ENCODE measurements at regions of chr1 and their contacts with region 1.

Region 1: GRCh38 chr1:88061492-88062177 is 622.4 kb upstream of the PKN2 start:
- DNase-seq: peak; percentile 38 to 46
- H3K4me3 ChIP-seq: no peak overlapping the region
- H3K27ac ChIP-seq: no peak overlapping the region
- H3K4me1 ChIP-seq: no peaks in the 10 kb centered on the region
- H3K27me3 ChIP-seq: no peaks in the 10 kb centered on the region
- CTCF ChIP-seq: peak; percentile 78

Region 2: DNA sequence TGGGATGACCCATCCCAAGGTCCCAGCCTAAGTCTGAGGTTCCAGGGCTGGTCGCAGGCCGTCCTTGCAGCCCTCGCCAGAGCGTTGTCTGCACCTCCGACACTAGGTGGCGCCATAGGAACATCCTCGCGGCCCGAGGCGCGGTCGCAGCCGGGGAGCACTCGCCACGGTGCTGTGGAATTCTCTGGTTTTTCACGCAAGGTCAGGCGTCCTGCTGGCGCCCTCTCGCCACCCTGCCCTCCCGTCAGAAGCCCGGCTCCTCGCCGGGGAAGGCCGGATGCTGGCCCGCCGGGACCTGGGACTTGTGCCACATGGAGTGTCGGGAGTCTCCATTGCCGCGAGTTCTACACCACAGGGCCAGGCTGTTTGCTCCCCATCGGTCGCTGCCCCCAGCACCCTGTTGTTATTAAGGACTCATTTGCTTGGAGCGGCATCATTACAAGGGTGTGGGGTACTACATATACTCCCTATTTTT is 929.8 kb before region 1 on chr1:
- CTCF ChIA-PET with region 1: no interaction called
- POLR2A ChIA-PET with region 1: no interaction called
- intact Hi-C with region 1: loop called (anchors 5 kb)
- DNase-seq: peak; percentile 55 to 69
- H3K4me3 ChIP-seq: peak overlapping the region; percentile 46; the same call in 1 of the 2 replicates
- H3K27ac ChIP-seq: no peak overlapping the region
- H3K4me1 ChIP-seq: 0 out of 2 replicates have a peak, but pooled peaks cover 12% of the 10 kb centered on the region
- H3K27me3 ChIP-seq: no peaks in the 10 kb centered on the region
- CTCF ChIP-seq: peak; percentile 97

Region 3: GRCh38 chr1:87292684-87293493 is 768.7 kb before region 1 on chr1:
- CTCF ChIA-PET with region 1: no interaction called
- POLR2A ChIA-PET with region 1: no interaction called
- intact Hi-C with region 1: loop called (anchors 10 kb)
- DNase-seq: peak; percentile 42 to 48
- H3K4me3 ChIP-seq: no peak overlapping the region
- H3K27ac ChIP-seq: no peak overlapping the region
- H3K4me1 ChIP-seq: no peaks in the 10 kb centered on the region
- H3K27me3 ChIP-seq: no peaks in the 10 kb centered on the region
- CTCF ChIP-seq: peak; percentile 96

Region 4: DNA sequence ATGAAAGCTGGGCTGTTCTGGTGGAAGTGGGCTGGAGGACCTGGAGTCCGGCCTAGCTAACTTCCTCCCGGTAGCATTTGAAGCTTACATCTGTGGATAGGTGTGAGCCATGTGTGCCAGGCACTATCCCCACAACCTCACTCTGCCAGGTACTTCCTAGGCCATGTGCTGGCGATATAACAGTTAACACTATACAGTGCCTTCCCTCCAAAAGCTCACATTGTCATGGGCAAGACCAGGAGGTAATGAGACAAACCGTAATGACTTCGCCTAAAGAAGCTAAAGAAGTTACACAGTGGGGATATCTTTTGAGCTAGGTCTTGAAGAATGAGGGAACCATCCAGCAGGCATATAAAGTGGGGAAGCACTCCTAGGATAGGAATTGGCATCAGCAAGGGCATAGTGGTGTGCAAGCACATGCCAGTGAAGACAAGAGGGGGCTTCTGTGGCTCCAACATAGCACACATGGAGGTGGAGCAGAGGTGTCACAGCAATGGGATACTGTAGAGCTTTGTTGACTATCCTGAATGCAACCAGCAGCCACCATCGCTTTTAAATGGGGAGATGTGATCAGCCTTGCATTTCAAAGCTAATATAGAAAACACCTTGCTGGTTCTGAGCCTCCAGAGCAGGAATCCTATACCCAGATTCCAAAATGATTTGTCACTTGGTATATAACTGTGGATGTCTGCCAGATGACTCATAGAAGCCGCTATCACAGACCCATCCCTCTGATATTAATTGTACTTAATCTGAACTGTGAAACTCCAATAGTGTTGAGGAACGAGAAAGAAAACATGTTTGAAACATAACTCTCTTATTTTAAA is 266.6 kb before region 1 on chr1:
- CTCF ChIA-PET with region 1: no interaction called
- POLR2A ChIA-PET with region 1: no interaction called
- intact Hi-C with region 1: loop called (anchors 1 kb)
- DNase-seq: peak; percentile 54 to 93
- H3K4me3 ChIP-seq: no peak overlapping the region
- H3K27ac ChIP-seq: peak overlapping the region; percentile 38
- H3K4me1 ChIP-seq: peaks cover 20% of the 10 kb centered on the region
- H3K27me3 ChIP-seq: no peaks in the 10 kb centered on the region
- CTCF ChIP-seq: no peak

Region 5: GRCh38 chr1:87916965-87917364 is 144.7 kb before region 1 on chr1:
- CTCF ChIA-PET with region 1: interaction called, 12 read pairs
- POLR2A ChIA-PET with region 1: no interaction called
- intact Hi-C with region 1: no loop called
- DNase-seq: no peak
- H3K4me3 ChIP-seq: no peak overlapping the region
- H3K27ac ChIP-seq: no peak overlapping the region
- H3K4me1 ChIP-seq: no peaks in the 10 kb centered on the region
- H3K27me3 ChIP-seq: no peaks in the 10 kb centered on the region
- CTCF ChIP-seq: no peak

Region 6: GRCh38 chr1:88050581-88050980 is 11.1 kb before region 1 on chr1:
- CTCF ChIA-PET with region 1: no interaction called
- POLR2A ChIA-PET with region 1: no interaction called
- intact Hi-C with region 1: no loop called
- DNase-seq: no peak
- H3K4me3 ChIP-seq: no peak overlapping the region
- H3K27ac ChIP-seq: no peak overlapping the region
- H3K4me1 ChIP-seq: no peaks in the 10 kb centered on the region
- H3K27me3 ChIP-seq: no peaks in the 10 kb centered on the region
- CTCF ChIP-seq: no peak